RWPE1 (cell line): ENCODE measurements at regions of chrX and their contacts with region 1.

Region 1: DNA sequence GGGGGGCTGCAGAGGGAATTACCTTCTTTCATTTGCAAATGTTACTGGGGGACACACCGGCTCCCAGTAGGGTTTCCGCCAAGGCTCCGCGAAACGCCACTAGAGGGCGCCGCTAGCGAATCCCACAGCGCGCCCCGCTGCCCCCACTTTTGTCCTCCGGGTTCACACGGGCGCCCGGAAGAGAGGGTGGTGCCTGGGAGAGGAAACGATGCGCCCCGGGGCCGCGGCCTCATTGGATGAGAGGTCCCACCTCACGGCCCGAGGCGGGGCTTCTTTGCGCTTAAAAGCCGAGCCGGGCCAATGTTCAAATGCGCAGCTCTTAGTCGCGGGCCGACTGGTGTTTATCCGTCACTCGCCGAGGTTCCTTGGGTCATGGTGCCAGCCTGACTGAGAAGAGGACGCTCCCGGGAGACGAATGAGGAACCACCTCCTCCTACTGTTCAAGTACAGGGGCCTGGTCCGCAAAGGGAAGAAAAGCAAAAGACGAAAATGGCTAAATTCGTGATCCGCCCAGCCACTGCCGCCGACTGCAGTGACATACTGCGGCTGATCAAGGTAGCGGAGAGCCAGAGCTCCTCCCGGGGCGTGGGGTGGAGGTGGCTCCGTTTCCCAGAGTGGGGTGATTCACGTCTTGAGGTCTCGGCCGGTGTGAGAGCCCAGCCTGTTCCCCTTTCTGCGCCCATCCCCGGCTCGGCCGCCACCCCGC is at the start of gene SAT1:
- DNase-seq: peak; percentile 82
- H3K27ac ChIP-seq: peak within 1 kb of the TSS; percentile 91
- CTCF ChIP-seq: peak; percentile 80

Region 2: GRCh38 chrX:23333842-23334520 is 449.0 kb before region 1 on chrX:
- CTCF ChIA-PET with region 1: no interaction called
- POLR2A ChIA-PET with region 1: no interaction called
- DNase-seq: no peak
- H3K27ac ChIP-seq: no peak overlapping the region
- CTCF ChIP-seq: no peak

Region 3: GRCh38 chrX:23570674-23571343 is 212.2 kb before region 1 on chrX:
- CTCF ChIA-PET with region 1: no interaction called
- POLR2A ChIA-PET with region 1: no interaction called
- DNase-seq: no peak
- H3K27ac ChIP-seq: no peak overlapping the region
- CTCF ChIP-seq: no peak

Region 4: DNA sequence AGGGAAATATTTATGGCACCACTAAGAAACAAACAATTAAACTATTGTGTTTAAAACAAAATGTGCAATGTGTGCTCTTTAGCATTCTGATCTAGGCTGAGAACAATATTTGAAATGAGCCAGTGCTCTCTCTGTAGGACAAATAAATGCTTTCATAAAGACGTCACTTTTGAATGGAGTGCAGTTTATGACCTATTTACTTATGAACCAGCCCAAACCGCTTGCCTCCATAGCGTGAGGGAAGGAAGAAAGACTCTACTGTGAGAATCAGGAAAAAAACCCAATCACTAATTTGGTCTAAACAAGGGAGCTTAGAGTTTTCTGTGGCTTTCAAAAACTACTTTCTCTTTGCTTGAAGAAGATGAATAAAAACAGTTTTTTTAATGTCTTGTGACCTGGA is 39.4 kb after region 1 on chrX:
- CTCF ChIA-PET with region 1: no interaction called
- POLR2A ChIA-PET with region 1: no interaction called
- DNase-seq: no peak
- H3K27ac ChIP-seq: no peak overlapping the region
- CTCF ChIP-seq: no peak

Region 5: GRCh38 chrX:23901805-23902204 is 118.8 kb after region 1 on chrX:
- CTCF ChIA-PET with region 1: interaction called, 5 read pairs
- POLR2A ChIA-PET with region 1: interaction called, 15 read pairs
- DNase-seq: peak; percentile 20
- H3K27ac ChIP-seq: peak overlapping the region; percentile 90; the same call in 1 of the 2 replicates
- CTCF ChIP-seq: 0 out of 2 replicates have a peak, but pooled peaks have one; percentile 17